ENCODE measurements at regions of chr4 and their contacts with region 1.

Region 1: DNA sequence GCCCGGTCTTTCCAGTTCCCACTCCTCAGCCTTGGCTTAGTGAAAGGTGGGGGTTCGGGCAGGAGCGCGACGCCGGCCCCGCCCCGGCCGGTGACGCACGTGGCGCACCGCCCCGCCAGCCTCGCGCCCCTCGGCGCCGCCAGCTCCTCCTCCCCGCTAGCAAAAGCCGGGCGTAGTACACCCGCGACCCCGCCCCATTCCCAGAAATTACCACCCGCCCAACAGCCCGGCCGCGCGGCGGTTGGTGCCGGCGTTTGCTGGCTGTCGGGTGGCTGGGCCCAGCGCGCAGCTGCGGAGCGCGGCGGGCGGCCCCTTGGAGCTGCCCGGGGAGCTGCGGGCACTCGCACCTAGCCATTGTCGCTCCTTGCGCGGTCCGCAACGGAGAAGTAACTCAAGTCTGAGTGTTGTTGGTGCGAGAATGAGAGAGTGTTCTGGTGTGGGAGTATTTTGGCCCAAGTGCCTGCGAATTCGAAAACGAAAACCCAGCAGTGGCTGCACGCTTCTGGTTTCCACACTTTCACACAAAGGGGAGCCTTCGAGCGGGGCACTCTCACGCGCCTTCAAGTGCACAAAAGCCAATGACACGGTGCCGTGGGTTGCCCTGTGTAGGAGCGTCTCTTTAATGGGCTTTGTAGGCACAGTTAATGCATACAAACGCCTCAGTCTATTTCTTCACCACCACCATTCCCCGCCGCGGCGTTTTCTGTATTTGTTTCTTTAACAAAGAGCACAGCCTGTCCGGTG is 1.0 kb upstream of the ELF2 start:
- DNase-seq: peak; percentile 86
- ATAC-seq: peak; percentile 81
- H3K4me3 ChIP-seq: peak overlapping the region; percentile 70 to 97 (median 77)
- H3K27ac ChIP-seq: peak overlapping the region; percentile 97
- H3K4me1 ChIP-seq: peaks cover 36% of the 10 kb centered on the region
- H3K27me3 ChIP-seq: no peaks in the 10 kb centered on the region
- CTCF ChIP-seq: peak; percentile 12; the same call in 1 of the 2 replicates
- EP300 ChIP-seq: no peak; a peak in 1 of 4 replicates
- POLR2A ChIP-seq: peak; percentile 80 to 90
- RAD21 ChIP-seq: no peak

Region 2: GRCh38 chr4:139083956-139084803 is 93.9 kb before region 1 on chr4:
- CTCF ChIA-PET with region 1: no interaction called
- POLR2A ChIA-PET with region 1: interaction called, 8 read pairs
- in situ Hi-C with region 1: no loop called
- intact Hi-C with region 1: loop called (anchors 5 kb)
- DNase-seq: peak; percentile 89
- ATAC-seq: peak; percentile 79
- H3K4me3 ChIP-seq: peak overlapping the region; percentile 69 to 95 (median 71)
- H3K27ac ChIP-seq: peak overlapping the region; percentile 94
- H3K4me1 ChIP-seq: peaks cover 34% of the 10 kb centered on the region
- H3K27me3 ChIP-seq: no peaks in the 10 kb centered on the region; a peak in 1 of 5 replicates
- CTCF ChIP-seq: peak; percentile 49; the same call in 1 of the 2 replicates
- EP300 ChIP-seq: no peak
- POLR2A ChIP-seq: peak; percentile 72 to 82
- RAD21 ChIP-seq: peak; percentile 22; the same call in 1 of the 2 replicates

Region 3: GRCh38 chr4:139167774-139168444 is 10.1 kb before region 1 on chr4:
- CTCF ChIA-PET with region 1: no interaction called
- POLR2A ChIA-PET with region 1: interaction called, 11 read pairs
- in situ Hi-C with region 1: no loop called
- intact Hi-C with region 1: no loop called
- DNase-seq: peak; percentile 62
- ATAC-seq: peak; percentile 91
- H3K4me3 ChIP-seq: no peak overlapping the region
- H3K27ac ChIP-seq: no peak overlapping the region
- H3K4me1 ChIP-seq: peaks cover 33% of the 10 kb centered on the region
- H3K27me3 ChIP-seq: no peaks in the 10 kb centered on the region
- CTCF ChIP-seq: peak; percentile 55
- EP300 ChIP-seq: no peak
- POLR2A ChIP-seq: no peak
- RAD21 ChIP-seq: peak; percentile 49; the same call in 1 of the 2 replicates

Region 4: DNA sequence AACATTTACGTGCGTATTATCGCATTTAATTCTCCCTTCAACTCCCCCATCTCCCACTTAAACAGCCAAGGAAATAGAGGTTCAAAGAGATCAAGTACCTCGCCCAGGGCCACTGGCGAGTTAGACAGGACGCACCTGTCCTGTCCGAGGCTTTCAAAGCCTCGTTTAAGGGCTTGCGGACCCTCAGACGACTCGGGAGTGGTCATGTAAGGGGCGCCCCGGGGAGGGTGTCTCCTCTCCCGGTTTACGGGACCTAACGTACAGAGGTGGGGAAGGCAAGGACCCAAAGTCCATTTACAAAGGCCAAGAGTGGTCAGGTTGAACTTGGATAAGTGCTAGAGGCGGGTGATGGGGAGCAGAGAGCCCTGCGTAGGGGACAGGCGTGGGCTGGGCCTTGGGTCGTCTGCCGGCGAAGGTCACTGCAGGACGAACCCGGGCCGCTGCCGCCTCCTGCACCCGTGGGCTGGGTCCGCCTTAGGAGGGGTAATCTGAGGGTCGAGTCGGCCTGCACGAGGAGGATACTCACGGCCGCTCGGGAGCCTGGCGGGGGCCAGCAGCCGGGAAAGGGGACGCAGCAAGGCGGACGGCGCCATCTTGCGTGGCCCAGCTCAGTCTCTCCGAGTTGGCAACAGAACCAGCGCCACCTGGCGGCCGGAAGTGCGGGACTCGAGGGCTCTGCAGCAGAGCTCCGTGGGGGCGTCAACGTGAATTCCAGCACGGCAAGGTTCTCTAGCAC is 117.3 kb after region 1 on chr4:
- CTCF ChIA-PET with region 1: no interaction called
- POLR2A ChIA-PET with region 1: interaction called, 37 read pairs
- in situ Hi-C with region 1: loop called (anchors 5 kb)
- intact Hi-C with region 1: loop called (anchors 2 kb)
- DNase-seq: peak; percentile 82
- ATAC-seq: peak; percentile 95
- H3K4me3 ChIP-seq: peak overlapping the region; percentile 85 to 93 (median 86)
- H3K27ac ChIP-seq: peak overlapping the region; percentile 92
- H3K4me1 ChIP-seq: peaks cover 54% of the 10 kb centered on the region
- H3K27me3 ChIP-seq: no peaks in the 10 kb centered on the region; a peak in 1 of 5 replicates
- CTCF ChIP-seq: peak; percentile 98
- EP300 ChIP-seq: 0 out of 4 replicates have a peak, but pooled peaks have one; percentile 11 to 41
- POLR2A ChIP-seq: peak; percentile 77 to 79; a peak in 3 of 4 replicates
- RAD21 ChIP-seq: peak; percentile 89

Region 5: DNA sequence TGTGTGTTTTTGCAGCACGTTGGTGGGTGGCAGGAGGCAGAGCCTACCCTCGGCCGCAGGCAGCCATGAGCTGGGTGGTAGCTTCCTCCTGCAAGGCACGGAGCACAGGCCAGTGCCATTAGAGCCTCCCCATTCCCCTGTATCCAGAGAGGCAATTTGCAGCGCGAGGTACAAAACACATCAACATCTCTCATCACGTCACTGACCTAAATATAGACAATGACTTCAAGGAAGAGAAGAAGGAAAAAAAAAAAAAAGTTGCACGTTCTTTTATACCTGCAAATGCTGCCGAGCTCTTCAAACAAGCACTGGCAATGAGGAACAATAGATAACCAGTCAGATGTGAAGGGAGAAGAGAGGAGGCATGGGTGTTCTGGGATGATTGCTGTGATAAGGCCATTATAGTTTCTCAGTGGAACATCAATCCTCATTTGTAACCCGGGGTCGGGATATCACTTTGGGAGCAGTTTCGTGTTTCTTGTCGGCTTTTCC is 647.5 kb after region 1 on chr4:
- CTCF ChIA-PET with region 1: no interaction called
- POLR2A ChIA-PET with region 1: no interaction called
- in situ Hi-C with region 1: no loop called
- intact Hi-C with region 1: no loop called
- DNase-seq: no peak
- ATAC-seq: no peak
- H3K4me3 ChIP-seq: no peak overlapping the region
- H3K27ac ChIP-seq: no peak overlapping the region
- H3K4me1 ChIP-seq: no peaks in the 10 kb centered on the region; the same call in 1 of the 2 replicates
- H3K27me3 ChIP-seq: peaks cover 1 to 23% of the 10 kb centered on the region in 2 experiments; a peak in 4 of 5 replicates
- CTCF ChIP-seq: no peak
- EP300 ChIP-seq: no peak
- POLR2A ChIP-seq: no peak
- RAD21 ChIP-seq: no peak